ENCODE measurements at regions of chr1 and their contacts with region 1.

Region 1: GRCh38 chr1:160098852-160099561 is 588 bp upstream of the IGSF8 start:
- DNase-seq: peak; percentile 96
- ATAC-seq: peak; percentile 91
- H3K4me3 ChIP-seq: peak overlapping the region; percentile 63 to 79 (median 72)
- H3K4me3 Mint-ChIP-seq: peak overlapping the region; percentile 88
- H3K27ac ChIP-seq: peak overlapping the region; percentile 95 to 99
- H3K27ac Mint-ChIP-seq: peak overlapping the region; percentile 86
- H3K4me1 ChIP-seq: peaks cover 33 to 45% of the 10 kb centered on the region in 2 donors
- H3K4me1 Mint-ChIP-seq: peaks cover 47% of the 10 kb centered on the region
- H3K27me3 ChIP-seq: no peaks in the 10 kb centered on the region
- H3K27me3 Mint-ChIP-seq: no peaks in the 10 kb centered on the region
- CTCF ChIP-seq: no peak

Region 2: DNA sequence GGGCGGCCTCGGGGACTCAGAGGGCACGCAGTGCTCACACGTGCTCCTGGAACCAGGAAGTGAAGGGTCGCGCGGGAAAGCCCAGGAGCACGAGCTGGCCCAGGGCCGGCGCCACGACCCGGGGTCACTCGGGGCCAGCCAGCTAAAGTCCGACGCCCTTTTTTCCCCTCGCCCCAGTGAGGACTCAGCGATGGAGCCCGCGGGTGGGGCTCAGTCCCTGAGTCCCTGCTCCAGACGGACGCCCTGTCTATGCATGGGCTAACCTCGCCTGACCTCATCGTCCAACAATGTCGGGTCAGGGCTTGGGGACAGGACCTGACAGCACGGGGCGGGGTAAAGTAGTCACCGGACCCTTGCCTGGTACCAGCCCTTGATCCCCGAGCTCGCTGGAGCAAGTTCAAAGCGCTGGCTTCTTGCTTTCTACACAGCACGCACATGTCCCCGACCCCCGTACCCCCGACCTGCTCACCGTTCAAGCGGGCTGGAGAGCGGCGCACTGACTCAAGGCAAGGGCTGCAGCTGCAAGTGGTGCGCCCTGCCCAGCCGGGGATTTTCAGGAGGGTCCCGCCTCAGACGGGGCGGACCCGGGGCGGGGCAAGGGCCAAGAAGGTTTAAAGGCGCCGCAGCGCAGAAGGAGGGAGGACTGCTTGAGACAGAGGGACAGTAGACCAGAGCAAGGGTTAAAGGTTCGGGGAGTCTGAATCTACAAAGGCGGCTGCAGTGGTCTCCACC is 173.9 kb before region 1 on chr1 and contains the start of gene TAGLN2:
- CTCF ChIA-PET with region 1: no interaction called
- POLR2A ChIA-PET with region 1: interaction called, 5 read pairs
- intact Hi-C with region 1: loop called (anchors 5 kb)
- DNase-seq: peak; percentile 93
- ATAC-seq: peak; percentile 65
- H3K4me3 ChIP-seq: peak within 1 kb of the TSS; percentile 81 to 100 (median 99)
- H3K4me3 Mint-ChIP-seq: peak within 1 kb of the TSS; percentile 96
- H3K27ac ChIP-seq: peak within 1 kb of the TSS; percentile 98 to 100
- H3K27ac Mint-ChIP-seq: peak within 1 kb of the TSS; percentile 99
- H3K4me1 ChIP-seq: peaks cover 40 to 45% of the 10 kb centered on the region in 2 donors
- H3K4me1 Mint-ChIP-seq: peaks cover 50% of the 10 kb centered on the region
- H3K27me3 ChIP-seq: no peaks in the 10 kb centered on the region
- H3K27me3 Mint-ChIP-seq: no peaks in the 10 kb centered on the region
- CTCF ChIP-seq: no peak
- total RNA-seq, gene TAGLN2: 342 and 354 TPM in 2 replicates

Region 3: DNA sequence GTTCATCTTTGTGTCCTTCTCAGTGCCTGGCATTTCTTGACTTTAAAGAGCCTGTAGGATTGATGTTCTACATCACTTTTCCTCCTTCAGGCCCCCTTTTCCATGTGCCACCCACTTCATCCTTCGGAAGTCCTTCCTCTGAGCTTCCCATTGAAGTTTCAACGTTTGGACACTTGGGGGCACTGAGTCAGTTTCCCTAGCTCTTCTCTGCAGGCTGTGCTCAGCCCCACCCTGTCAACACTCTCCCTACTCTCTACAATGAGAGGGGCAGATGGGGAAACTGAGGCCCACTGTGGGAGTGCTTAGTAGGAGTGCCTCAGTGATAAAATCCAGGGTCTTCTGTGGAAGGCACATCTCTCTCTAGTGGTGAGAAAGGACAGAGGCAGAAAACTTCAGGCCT is 40.9 kb before region 1 on chr1:
- CTCF ChIA-PET with region 1: no interaction called
- POLR2A ChIA-PET with region 1: no interaction called
- intact Hi-C with region 1: no loop called
- DNase-seq: no peak
- ATAC-seq: no peak
- H3K4me3 ChIP-seq: no peak overlapping the region
- H3K4me3 Mint-ChIP-seq: no peak overlapping the region
- H3K27ac ChIP-seq: no peak overlapping the region
- H3K27ac Mint-ChIP-seq: no peak overlapping the region
- H3K4me1 ChIP-seq: no peaks in the 10 kb centered on the region
- H3K4me1 Mint-ChIP-seq: no peaks in the 10 kb centered on the region
- H3K27me3 ChIP-seq: peaks cover 0 to 58% (median 12%) of the 10 kb centered on the region in 4 experiments
- H3K27me3 Mint-ChIP-seq: peaks cover 57% of the 10 kb centered on the region
- CTCF ChIP-seq: no peak

Region 4: GRCh38 chr1:160085686-160086455 is 13.1 kb before region 1 on chr1:
- CTCF ChIA-PET with region 1: interaction called, 60 read pairs
- POLR2A ChIA-PET with region 1: interaction called, 5 read pairs
- intact Hi-C with region 1: loop called (anchors 2 kb)
- DNase-seq: peak; percentile 79
- ATAC-seq: peak; percentile 58
- H3K4me3 ChIP-seq: no peak overlapping the region
- H3K4me3 Mint-ChIP-seq: peak overlapping the region; percentile 26
- H3K27ac ChIP-seq: no peak overlapping the region
- H3K27ac Mint-ChIP-seq: peak overlapping the region; percentile 21
- H3K4me1 ChIP-seq: peaks cover 6 to 9% of the 10 kb centered on the region in 2 donors
- H3K4me1 Mint-ChIP-seq: peaks cover 12% of the 10 kb centered on the region
- H3K27me3 ChIP-seq: peaks cover 0 to 25% (median 18%) of the 10 kb centered on the region in 4 experiments
- H3K27me3 Mint-ChIP-seq: peaks cover 20% of the 10 kb centered on the region
- CTCF ChIP-seq: peak; percentile 85

Region 5: DNA sequence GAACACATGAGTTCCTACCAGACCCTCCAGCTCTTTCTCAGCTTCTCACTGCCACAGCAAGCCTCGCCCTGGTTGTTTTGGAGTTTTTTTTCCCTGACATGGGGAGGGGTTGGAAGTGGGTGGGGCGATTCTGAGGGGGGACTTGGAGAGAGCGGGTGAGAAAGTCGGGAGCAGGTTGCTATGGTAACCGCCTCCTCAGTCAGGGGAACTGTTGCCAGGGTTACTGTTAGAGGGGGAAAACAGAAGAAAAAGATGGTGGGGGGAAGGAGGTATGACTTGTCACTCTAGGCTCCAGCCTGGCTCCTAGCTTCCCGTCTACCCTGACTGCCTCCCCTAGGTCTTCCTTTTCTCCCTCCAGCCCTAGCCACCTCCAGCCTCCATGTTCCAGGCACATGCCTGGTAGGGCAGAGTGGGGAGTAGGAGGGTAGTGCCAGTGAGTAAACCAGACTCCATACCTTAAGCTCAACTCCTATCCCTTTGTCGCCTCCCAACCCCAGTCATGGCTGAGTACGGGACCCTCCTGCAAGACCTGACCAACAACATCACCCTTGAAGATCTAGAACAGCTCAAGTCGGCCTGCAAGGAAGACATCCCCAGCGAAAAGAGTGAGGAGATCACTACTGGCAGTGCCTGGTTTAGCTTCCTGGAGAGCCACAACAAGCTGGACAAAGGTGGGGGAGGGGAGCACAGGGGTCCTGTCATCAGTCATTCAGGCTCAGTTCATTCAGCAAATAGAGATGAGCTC is 112.2 kb after region 1 on chr1:
- CTCF ChIA-PET with region 1: no interaction called
- POLR2A ChIA-PET with region 1: no interaction called
- intact Hi-C with region 1: no loop called
- DNase-seq: no peak
- ATAC-seq: no peak
- H3K4me3 ChIP-seq: no peak overlapping the region
- H3K4me3 Mint-ChIP-seq: no peak overlapping the region
- H3K27ac ChIP-seq: peak overlapping the region in 1 of 2 donors; percentile 4
- H3K27ac Mint-ChIP-seq: peak overlapping the region; percentile 23
- H3K4me1 ChIP-seq: peaks cover 10 to 14% of the 10 kb centered on the region in 2 donors
- H3K4me1 Mint-ChIP-seq: peaks cover 37% of the 10 kb centered on the region
- H3K27me3 ChIP-seq: no peaks in the 10 kb centered on the region
- H3K27me3 Mint-ChIP-seq: no peaks in the 10 kb centered on the region
- CTCF ChIP-seq: no peak

Region 6: GRCh38 chr1:160261893-160262794 is 163.1 kb after region 1 on chr1 and contains the start of gene DCAF8:
- CTCF ChIA-PET with region 1: interaction called, 7 read pairs
- POLR2A ChIA-PET with region 1: interaction called, 6 read pairs
- intact Hi-C with region 1: loop called (anchors 1 kb)
- DNase-seq: peak; percentile 98
- ATAC-seq: peak; percentile 92
- H3K4me3 ChIP-seq: peak within 1 kb of the TSS; percentile 96 to 100 (median 99)
- H3K4me3 Mint-ChIP-seq: peak within 1 kb of the TSS; percentile 100
- H3K27ac ChIP-seq: peak within 1 kb of the TSS; percentile 96 to 97
- H3K27ac Mint-ChIP-seq: peak within 1 kb of the TSS; percentile 92
- H3K4me1 ChIP-seq: peaks cover 20 to 22% of the 10 kb centered on the region in 2 donors
- H3K4me1 Mint-ChIP-seq: peaks cover 41% of the 10 kb centered on the region
- H3K27me3 ChIP-seq: no peaks in the 10 kb centered on the region
- H3K27me3 Mint-ChIP-seq: no peaks in the 10 kb centered on the region
- CTCF ChIP-seq: no peak
- total RNA-seq, gene DCAF8: 247 and 266 TPM in 2 replicates

Region 7: DNA sequence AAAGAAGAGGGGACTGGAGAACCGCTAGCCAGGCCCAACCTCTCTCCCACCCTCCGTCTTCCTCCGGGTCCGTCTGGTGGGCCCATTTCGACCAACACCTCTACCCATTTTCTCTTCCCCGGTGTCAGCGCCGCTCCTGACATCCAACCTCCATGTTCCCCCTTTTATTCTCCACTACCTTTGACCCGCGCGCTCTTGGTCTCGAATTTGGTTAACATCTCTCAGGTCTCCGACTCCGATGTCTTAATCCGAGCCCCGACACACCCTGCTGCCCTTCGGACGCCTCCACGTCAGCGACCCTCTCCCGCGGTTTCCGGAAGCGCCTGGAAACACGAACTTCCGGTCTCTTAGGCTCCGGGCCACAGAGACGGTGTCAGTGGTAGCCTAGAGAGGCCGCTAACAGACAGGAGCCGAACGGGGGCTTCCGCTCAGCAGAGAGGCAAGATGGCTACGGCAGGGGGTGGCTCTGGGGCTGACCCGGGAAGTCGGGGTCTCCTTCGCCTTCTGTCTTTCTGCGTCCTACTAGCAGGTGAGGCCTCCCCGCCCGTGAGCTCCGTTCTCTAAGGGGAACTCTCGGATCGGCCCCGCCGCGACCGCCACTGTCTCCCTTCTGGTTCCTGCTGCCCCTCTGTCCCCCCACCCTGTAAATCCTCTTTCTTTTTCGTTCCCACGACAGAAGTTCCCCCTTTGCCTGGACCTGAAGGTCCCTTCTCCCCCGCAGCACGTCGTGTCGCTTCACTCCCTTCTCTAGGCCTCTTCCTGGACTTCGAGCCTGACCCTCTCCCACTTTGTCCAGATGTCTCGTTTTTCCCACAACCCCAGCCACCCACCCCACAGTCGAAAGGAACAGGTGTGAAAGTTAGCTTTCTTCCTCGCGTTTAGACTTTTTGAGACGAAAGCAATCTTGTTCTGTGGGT is 244.2 kb after region 1 on chr1 and contains the starts of genes COPA and NCSTN:
- CTCF ChIA-PET with region 1: interaction called, 5 read pairs
- POLR2A ChIA-PET with region 1: no interaction called
- intact Hi-C with region 1: loop called (anchors 1 kb)
- DNase-seq: peak; percentile 97
- ATAC-seq: peak; percentile 91
- H3K4me3 ChIP-seq: peak within 1 kb of the TSS; percentile 90 to 100 (median 98)
- H3K4me3 Mint-ChIP-seq: peak within 1 kb of the TSS; percentile 99
- H3K27ac ChIP-seq: peak within 1 kb of the TSS; percentile 89 to 95
- H3K27ac Mint-ChIP-seq: peak within 1 kb of the TSS; percentile 99
- H3K4me1 ChIP-seq: peaks cover 46 to 54% of the 10 kb centered on the region in 2 donors
- H3K4me1 Mint-ChIP-seq: peaks cover 71% of the 10 kb centered on the region
- H3K27me3 ChIP-seq: no peaks in the 10 kb centered on the region
- H3K27me3 Mint-ChIP-seq: no peaks in the 10 kb centered on the region
- CTCF ChIP-seq: no peak
- total RNA-seq, gene COPA: 168 and 180 TPM in 2 replicates
- total RNA-seq, gene NCSTN: 95.1 and 110 TPM in 2 replicates